ENCODE measurements at regions of chr10 and their contacts with region 1.

Region 1: GRCh38 chr10:27742195-27743011 is 3.2 kb downstream of the MKX start:
- DNase-seq: peak; percentile 66
- H3K4me3 ChIP-seq: peak overlapping the region; percentile 47 to 50 (median 48)
- H3K27ac ChIP-seq: no peak overlapping the region
- H3K4me1 ChIP-seq: peaks cover 25% of the 10 kb centered on the region
- H3K27me3 ChIP-seq: peaks cover 63 to 94% of the 10 kb centered on the region in 2 experiments
- CTCF ChIP-seq: peak; percentile 79 to 84
- POLR2A ChIP-seq: no peak

Region 2: DNA sequence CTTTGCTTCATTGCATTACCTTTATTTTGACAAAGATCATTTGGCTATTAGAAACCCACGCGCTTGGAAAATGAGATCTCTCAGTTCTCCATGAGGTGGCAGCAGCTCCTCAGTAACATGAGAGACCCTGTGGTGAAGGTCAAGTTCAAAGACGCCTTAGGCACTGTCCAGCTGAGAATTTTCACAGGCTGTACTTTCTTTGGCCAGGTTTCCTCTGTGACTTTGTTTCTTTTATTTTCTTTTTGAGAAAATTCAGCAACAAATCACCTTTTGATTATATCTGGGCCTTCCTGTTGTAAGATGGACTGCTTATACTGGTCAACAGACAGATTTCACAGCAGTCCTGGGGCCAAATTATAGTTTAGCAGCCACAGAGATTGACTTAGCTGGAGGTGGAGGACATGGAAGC is 183.8 kb before region 1 on chr10:
- CTCF ChIA-PET with region 1: no interaction called
- POLR2A ChIA-PET with region 1: no interaction called
- dilution Hi-C with region 1: no loop called
- intact Hi-C with region 1: loop called (anchors 5 kb)
- DNase-seq: peak; percentile 48
- H3K4me3 ChIP-seq: no peak overlapping the region
- H3K27ac ChIP-seq: no peak overlapping the region
- H3K4me1 ChIP-seq: no peaks in the 10 kb centered on the region
- H3K27me3 ChIP-seq: no peaks in the 10 kb centered on the region
- CTCF ChIP-seq: peak; percentile 50 to 53
- POLR2A ChIP-seq: no peak

Region 3: DNA sequence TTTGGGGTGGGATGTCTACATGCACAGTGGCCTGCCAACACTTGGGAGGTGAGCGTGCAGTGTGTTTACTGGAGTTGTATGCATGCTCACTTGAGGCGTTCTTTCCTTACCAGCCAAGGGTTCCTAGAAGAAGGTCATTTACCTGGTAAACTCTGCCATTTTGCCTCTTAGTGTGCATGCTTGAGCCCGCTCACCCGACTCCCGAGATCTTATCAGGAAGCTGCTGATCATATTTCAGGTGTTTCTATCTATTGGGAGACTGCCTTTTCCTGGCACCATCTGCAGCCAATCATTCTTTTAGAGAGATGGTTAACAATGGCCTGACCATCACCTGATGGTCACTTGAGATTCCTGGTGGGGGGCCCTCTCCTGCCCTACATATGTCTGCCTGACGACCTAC is 33.9 kb after region 1 on chr10:
- CTCF ChIA-PET with region 1: no interaction called
- POLR2A ChIA-PET with region 1: no interaction called
- dilution Hi-C with region 1: no loop called
- intact Hi-C with region 1: no loop called
- DNase-seq: no peak
- H3K4me3 ChIP-seq: no peak overlapping the region
- H3K27ac ChIP-seq: no peak overlapping the region
- H3K4me1 ChIP-seq: no peaks in the 10 kb centered on the region
- H3K27me3 ChIP-seq: peaks cover 1 to 19% of the 10 kb centered on the region in 2 experiments
- CTCF ChIP-seq: no peak
- POLR2A ChIP-seq: no peak

Region 4: DNA sequence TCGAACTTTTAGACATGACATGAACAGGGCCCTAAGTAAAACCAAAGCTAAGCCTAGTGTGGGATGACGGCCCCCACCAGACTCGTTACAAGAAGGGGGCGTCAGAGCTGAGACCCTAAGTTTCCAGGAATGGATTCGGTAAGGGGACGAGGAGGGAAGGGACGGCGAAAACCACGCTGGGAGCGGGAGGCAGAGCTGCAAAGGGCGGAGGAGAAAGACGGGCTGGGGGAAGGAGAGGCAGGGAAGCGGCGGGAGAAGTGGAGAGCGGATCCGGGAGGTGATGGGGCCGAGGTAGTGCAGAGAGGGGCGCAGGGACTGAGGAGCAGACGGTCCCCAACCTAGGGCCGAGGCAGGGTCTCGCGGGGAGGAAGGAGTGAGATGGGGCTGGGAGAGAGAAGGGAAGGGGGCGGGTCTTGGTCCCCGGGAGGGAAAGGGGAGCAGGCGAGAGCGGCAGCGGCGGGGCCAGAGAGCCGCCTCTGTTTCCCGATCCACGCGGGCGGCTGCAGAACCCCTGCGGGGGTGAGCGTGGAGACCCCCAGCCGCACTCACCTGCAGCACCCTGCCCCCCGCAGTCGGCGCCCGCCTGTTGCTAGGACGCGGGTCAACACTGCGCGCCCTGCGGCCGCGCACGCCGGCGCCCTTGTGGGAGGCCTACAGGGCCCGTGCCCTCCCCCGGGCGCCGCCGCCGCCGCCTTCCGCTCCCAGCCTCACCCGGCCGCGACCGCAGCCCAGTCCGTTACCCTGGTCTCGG is 256.0 kb after region 1 on chr10:
- CTCF ChIA-PET with region 1: no interaction called
- POLR2A ChIA-PET with region 1: no interaction called
- dilution Hi-C with region 1: no loop called
- intact Hi-C with region 1: loop called (anchors 5 kb)
- DNase-seq: peak; percentile 51
- H3K4me3 ChIP-seq: peak overlapping the region; percentile 41 to 87 (median 71)
- H3K27ac ChIP-seq: peak overlapping the region; percentile 32
- H3K4me1 ChIP-seq: peaks cover 6% of the 10 kb centered on the region
- H3K27me3 ChIP-seq: no peaks in the 10 kb centered on the region
- CTCF ChIP-seq: no peak
- POLR2A ChIP-seq: peak; percentile 76

Region 5: GRCh38 chr10:28241741-28242399 is 499.5 kb after region 1 on chr10:
- CTCF ChIA-PET with region 1: interaction called, 86 read pairs
- POLR2A ChIA-PET with region 1: no interaction called
- dilution Hi-C with region 1: no loop called
- intact Hi-C with region 1: loop called (anchors 1 kb)
- DNase-seq: peak; percentile 65
- H3K4me3 ChIP-seq: no peak overlapping the region
- H3K27ac ChIP-seq: no peak overlapping the region
- H3K4me1 ChIP-seq: no peaks in the 10 kb centered on the region
- H3K27me3 ChIP-seq: peaks cover 10 to 16% of the 10 kb centered on the region in 2 experiments
- CTCF ChIP-seq: peak; percentile 71 to 78
- POLR2A ChIP-seq: no peak

Region 6: GRCh38 chr10:28302638-28303488 is 560.5 kb after region 1 on chr10 and contains the start of gene MPP7:
- CTCF ChIA-PET with region 1: interaction called, 3 read pairs
- POLR2A ChIA-PET with region 1: no interaction called
- dilution Hi-C with region 1: no loop called
- intact Hi-C with region 1: loop called (anchors 1 kb)
- DNase-seq: peak; percentile 98
- H3K4me3 ChIP-seq: peak within 1 kb of the TSS; percentile 56 to 78 (median 63)
- H3K27ac ChIP-seq: no peak within 1 kb of the TSS
- H3K4me1 ChIP-seq: peaks cover 6% of the 10 kb centered on the region
- H3K27me3 ChIP-seq: peaks cover 23 to 41% of the 10 kb centered on the region in 2 experiments
- CTCF ChIP-seq: no peak
- POLR2A ChIP-seq: no peak
- total RNA-seq, gene MPP7: 0.73 and 1.0 TPM in 2 replicates

Measured in endothelial cell of umbilical vein (primary cell).